ENCODE measurements at regions of chr11 and their contacts with region 1.

Region 1: GRCh38 chr11:6505577-6506240 is 8.6 kb downstream of the DNHD1 start:
- DNase-seq: peak; percentile 12
- ATAC-seq: peak; percentile 69
- H3K4me3 Mint-ChIP-seq: no peak overlapping the region
- H3K27ac Mint-ChIP-seq: no peak overlapping the region
- H3K4me1 Mint-ChIP-seq: peaks cover 4% of the 10 kb centered on the region
- H3K27me3 Mint-ChIP-seq: no peaks in the 10 kb centered on the region
- CTCF ChIP-seq: peak; percentile 57

Region 2: DNA sequence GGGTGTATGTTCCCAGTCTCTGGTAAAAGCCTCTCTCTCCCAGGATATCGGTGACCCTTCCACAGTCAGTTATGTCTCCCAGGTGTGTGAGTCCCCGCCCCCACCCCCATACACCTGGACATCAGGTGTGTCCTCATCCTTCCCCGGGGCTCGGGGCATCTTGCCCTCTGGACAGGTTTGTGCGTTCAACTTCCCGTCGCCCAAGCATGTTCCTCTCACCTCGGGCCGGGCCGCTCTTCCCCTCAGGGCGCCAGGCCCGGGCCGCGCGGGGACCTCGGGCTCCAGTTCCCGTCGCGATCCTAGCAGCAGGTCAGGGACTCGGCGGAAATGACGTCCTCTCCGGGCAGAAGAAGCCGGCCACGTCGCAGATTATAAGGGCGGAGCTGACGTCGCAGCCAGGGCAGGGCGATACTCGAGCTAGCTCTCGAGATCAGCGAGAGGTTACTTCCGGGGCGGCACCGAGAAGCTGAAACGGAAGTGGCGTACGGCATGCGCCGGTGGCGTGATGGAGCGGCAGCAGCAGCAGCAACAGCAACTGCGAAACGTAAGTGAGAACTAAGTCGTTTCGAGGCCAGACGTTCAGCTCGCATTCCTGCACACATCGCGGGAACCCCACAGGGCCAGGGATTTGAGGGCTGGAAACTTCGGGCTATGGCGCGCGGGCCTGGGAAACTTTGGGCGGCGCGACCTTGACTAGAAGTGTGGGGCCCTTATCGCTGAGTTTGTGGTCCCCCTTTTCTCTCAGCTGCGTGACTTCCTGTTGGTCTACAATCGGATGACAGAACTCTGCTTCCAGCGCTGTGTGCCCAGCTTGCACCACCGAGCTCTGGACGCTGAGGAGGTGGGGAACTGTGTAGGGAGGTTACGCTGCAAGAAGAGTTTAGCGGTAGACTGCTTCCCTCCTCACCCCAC is 24.4 kb before region 1 on chr11 and contains the starts of genes ARFIP2 and TIMM10B:
- CTCF ChIA-PET with region 1: interaction called, 14 read pairs
- POLR2A ChIA-PET with region 1: interaction called, 13 read pairs
- intact Hi-C with region 1: no loop called
- DNase-seq: peak; percentile 99
- ATAC-seq: peak; percentile 98
- H3K4me3 Mint-ChIP-seq: peak within 1 kb of the TSS; percentile 87
- H3K27ac Mint-ChIP-seq: peak within 1 kb of the TSS; percentile 96
- H3K4me1 Mint-ChIP-seq: peaks cover 34% of the 10 kb centered on the region
- H3K27me3 Mint-ChIP-seq: no peaks in the 10 kb centered on the region
- CTCF ChIP-seq: no peak
- total RNA-seq, gene ARFIP2: 36.9 to 38.3 TPM
- total RNA-seq, gene TIMM10B: 40.6 to 43.0 TPM

Region 3: GRCh38 chr11:6486938-6487337 is 18.8 kb before region 1 on chr11:
- CTCF ChIA-PET with region 1: interaction called, 14 read pairs
- POLR2A ChIA-PET with region 1: interaction called, 13 read pairs
- intact Hi-C with region 1: no loop called
- DNase-seq: no peak
- ATAC-seq: no peak
- H3K4me3 Mint-ChIP-seq: no peak overlapping the region
- H3K27ac Mint-ChIP-seq: no peak overlapping the region
- H3K4me1 Mint-ChIP-seq: peaks cover 19% of the 10 kb centered on the region
- H3K27me3 Mint-ChIP-seq: no peaks in the 10 kb centered on the region
- CTCF ChIP-seq: no peak

Region 4: GRCh38 chr11:6523253-6523652 is 17.5 kb after region 1 on chr11:
- CTCF ChIA-PET with region 1: interaction called, 12 read pairs
- POLR2A ChIA-PET with region 1: interaction called, 3 read pairs
- intact Hi-C with region 1: no loop called
- DNase-seq: no peak
- ATAC-seq: peak; percentile 68
- H3K4me3 Mint-ChIP-seq: no peak overlapping the region
- H3K27ac Mint-ChIP-seq: peak overlapping the region; percentile 40
- H3K4me1 Mint-ChIP-seq: peaks cover 46% of the 10 kb centered on the region
- H3K27me3 Mint-ChIP-seq: no peaks in the 10 kb centered on the region
- CTCF ChIP-seq: no peak

Region 5: GRCh38 chr11:6556139-6556949 is 50.6 kb after region 1 on chr11:
- CTCF ChIA-PET with region 1: no interaction called
- POLR2A ChIA-PET with region 1: no interaction called
- intact Hi-C with region 1: no loop called
- DNase-seq: no peak
- ATAC-seq: no peak
- H3K4me3 Mint-ChIP-seq: no peak overlapping the region
- H3K27ac Mint-ChIP-seq: no peak overlapping the region
- H3K4me1 Mint-ChIP-seq: no peaks in the 10 kb centered on the region
- H3K27me3 Mint-ChIP-seq: no peaks in the 10 kb centered on the region
- CTCF ChIP-seq: no peak